B cell (primary cell): ENCODE measurements at regions of chr3 and their contacts with region 1.

Region 1: GRCh38 chr3:161423911-161424522 is 52.7 kb upstream of the SPTSSB start:
- DNase-seq: peak; percentile 38
- ATAC-seq: no peak
- H3K4me3 ChIP-seq: no peak overlapping the region
- H3K4me3 Mint-ChIP-seq: no peak overlapping the region
- H3K27ac ChIP-seq: no peak overlapping the region
- H3K27ac Mint-ChIP-seq: no peak overlapping the region
- H3K4me1 ChIP-seq: no peaks in the 10 kb centered on the region
- H3K4me1 Mint-ChIP-seq: no peaks in the 10 kb centered on the region
- H3K27me3 ChIP-seq: peaks cover 0 to 2% (median 0%) of the 10 kb centered on the region in 4 experiments
- H3K27me3 Mint-ChIP-seq: peaks cover 4% of the 10 kb centered on the region
- CTCF ChIP-seq: peak; percentile 94

Region 2: GRCh38 chr3:160486459-160486869 is 937.6 kb before region 1 on chr3:
- CTCF ChIA-PET with region 1: no interaction called
- POLR2A ChIA-PET with region 1: no interaction called
- intact Hi-C with region 1: loop called (anchors 5 kb)
- DNase-seq: peak; percentile 48
- ATAC-seq: no peak
- H3K4me3 ChIP-seq: no peak overlapping the region
- H3K4me3 Mint-ChIP-seq: no peak overlapping the region
- H3K27ac ChIP-seq: no peak overlapping the region
- H3K27ac Mint-ChIP-seq: no peak overlapping the region
- H3K4me1 ChIP-seq: peaks cover 3 to 7% of the 10 kb centered on the region in 2 donors
- H3K4me1 Mint-ChIP-seq: peaks cover 8% of the 10 kb centered on the region
- H3K27me3 ChIP-seq: no peaks in the 10 kb centered on the region
- H3K27me3 Mint-ChIP-seq: no peaks in the 10 kb centered on the region
- CTCF ChIP-seq: peak; percentile 83

Region 3: DNA sequence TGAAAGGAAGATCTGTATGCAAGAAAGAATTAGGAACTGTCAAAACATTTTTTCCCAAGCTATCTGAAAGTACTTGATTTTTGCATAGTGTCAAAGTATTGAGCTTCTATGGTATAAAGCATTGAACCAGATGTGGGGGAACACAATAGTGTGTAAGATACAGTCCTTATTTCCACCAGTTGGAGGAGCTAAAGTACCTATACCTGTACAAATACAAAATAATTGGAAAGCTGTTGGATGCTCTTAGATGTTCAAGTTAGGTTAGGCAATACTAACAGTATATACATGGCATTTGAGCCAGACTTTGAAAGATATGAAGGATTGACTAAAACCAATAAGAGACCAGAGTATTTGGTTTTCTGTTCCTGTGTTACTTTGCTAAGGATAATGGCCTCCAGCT is 467.2 kb before region 1 on chr3:
- CTCF ChIA-PET with region 1: interaction called, 19 read pairs
- POLR2A ChIA-PET with region 1: no interaction called
- intact Hi-C with region 1: loop called (anchors 5 kb)
- DNase-seq: peak; percentile 19
- ATAC-seq: no peak
- H3K4me3 ChIP-seq: no peak overlapping the region
- H3K4me3 Mint-ChIP-seq: no peak overlapping the region
- H3K27ac ChIP-seq: no peak overlapping the region
- H3K27ac Mint-ChIP-seq: no peak overlapping the region
- H3K4me1 ChIP-seq: no peaks in the 10 kb centered on the region
- H3K4me1 Mint-ChIP-seq: no peaks in the 10 kb centered on the region
- H3K27me3 ChIP-seq: no peaks in the 10 kb centered on the region
- H3K27me3 Mint-ChIP-seq: no peaks in the 10 kb centered on the region
- CTCF ChIP-seq: peak; percentile 41

Region 4: GRCh38 chr3:161096771-161097355 is 327.2 kb before region 1 on chr3:
- CTCF ChIA-PET with region 1: interaction called, 3 read pairs
- POLR2A ChIA-PET with region 1: no interaction called
- intact Hi-C with region 1: loop called (anchors 2 kb)
- DNase-seq: peak; percentile 14
- ATAC-seq: no peak
- H3K4me3 ChIP-seq: no peak overlapping the region
- H3K4me3 Mint-ChIP-seq: no peak overlapping the region
- H3K27ac ChIP-seq: no peak overlapping the region
- H3K27ac Mint-ChIP-seq: no peak overlapping the region
- H3K4me1 ChIP-seq: no peaks in the 10 kb centered on the region
- H3K4me1 Mint-ChIP-seq: no peaks in the 10 kb centered on the region
- H3K27me3 ChIP-seq: no peaks in the 10 kb centered on the region
- H3K27me3 Mint-ChIP-seq: no peaks in the 10 kb centered on the region
- CTCF ChIP-seq: peak; percentile 35

Region 5: GRCh38 chr3:161274719-161275298 is 149.2 kb before region 1 on chr3:
- CTCF ChIA-PET with region 1: interaction called, 5 read pairs
- POLR2A ChIA-PET with region 1: no interaction called
- intact Hi-C with region 1: loop called (anchors 1 kb)
- DNase-seq: peak; percentile 47
- ATAC-seq: no peak
- H3K4me3 ChIP-seq: no peak overlapping the region
- H3K4me3 Mint-ChIP-seq: no peak overlapping the region
- H3K27ac ChIP-seq: no peak overlapping the region
- H3K27ac Mint-ChIP-seq: no peak overlapping the region
- H3K4me1 ChIP-seq: no peaks in the 10 kb centered on the region
- H3K4me1 Mint-ChIP-seq: no peaks in the 10 kb centered on the region
- H3K27me3 ChIP-seq: no peaks in the 10 kb centered on the region
- H3K27me3 Mint-ChIP-seq: no peaks in the 10 kb centered on the region
- CTCF ChIP-seq: peak; percentile 64